Colonic mucosa (tissue), 4 donors: ENCODE measurements at regions of chrX and their contacts with region 1.

Region 1: DNA sequence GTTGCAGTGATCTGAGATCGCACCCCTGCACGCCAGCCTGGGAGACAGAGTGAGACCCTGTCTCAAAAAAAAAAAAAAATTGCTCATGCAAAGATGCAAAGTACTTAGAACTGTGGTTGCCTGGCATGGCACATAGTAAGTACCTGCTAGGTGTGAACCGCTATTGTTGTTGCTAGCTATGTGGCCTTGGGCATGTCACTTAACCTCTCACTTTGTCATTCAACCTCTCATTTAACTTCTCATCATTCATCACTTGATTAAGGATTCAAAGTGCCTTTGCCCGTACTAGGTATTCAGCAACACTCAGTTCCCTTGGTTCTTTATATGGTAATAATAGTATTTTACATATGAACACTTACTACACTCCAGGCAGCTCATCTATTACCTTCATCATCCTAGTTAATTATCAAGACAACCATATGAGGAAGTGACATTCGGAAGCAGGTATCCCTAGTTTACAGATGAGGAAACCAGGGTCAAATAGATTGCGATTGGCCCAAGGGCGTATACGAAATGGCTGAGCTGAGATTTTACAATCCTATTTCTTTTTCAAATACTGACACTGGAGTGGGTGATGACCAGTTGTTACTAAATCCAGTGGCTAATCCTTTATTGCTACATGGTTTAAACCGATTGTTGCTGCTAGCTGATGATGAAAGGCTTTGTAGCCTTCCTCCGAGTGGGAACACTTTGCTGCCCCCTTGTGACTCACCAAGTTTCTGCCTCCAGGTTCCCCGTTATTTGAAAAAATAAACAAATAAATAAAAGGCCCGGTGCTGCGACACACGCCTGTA is 28.8 kb upstream of the SOWAHD start:
- DNase-seq: peak; percentile 57
- H3K4me3 ChIP-seq: no peak overlapping the region
- H3K27ac ChIP-seq: no peak overlapping the region
- H3K4me1 ChIP-seq: no peaks in the 10 kb centered on the region
- H3K27me3 ChIP-seq: no peaks in the 10 kb centered on the region
- CTCF ChIP-seq: peak; percentile 47

Region 2: DNA sequence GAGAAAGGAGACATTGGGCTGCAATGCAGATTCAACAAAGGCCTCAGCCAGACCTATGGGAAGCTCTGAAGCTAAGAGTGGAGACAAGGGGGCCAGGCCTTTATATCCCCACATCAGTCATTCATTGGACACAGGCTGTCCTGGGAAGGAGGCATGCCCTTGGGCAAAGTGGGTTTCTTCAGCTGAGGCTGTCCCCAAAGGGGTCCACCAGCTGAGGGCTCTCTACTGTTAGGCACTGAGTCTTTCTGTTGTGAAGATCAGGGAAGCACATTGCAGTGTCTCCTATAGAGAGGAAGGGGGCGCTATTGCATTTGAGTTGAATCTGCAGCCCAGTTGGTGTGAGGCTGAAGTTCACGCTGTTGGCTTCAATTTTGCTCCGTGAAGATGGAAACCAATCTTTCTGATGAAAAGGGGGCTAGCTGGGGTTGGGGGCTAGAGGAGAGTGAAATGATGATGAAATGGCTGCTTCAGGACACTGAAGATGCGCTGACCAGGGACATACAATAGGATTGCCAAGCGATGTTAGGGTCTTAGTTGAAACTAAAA is 213.4 kb before region 1 on chrX:
- intact Hi-C with region 1: loop called (anchors 10 kb)
- DNase-seq: peak; percentile 40
- H3K4me3 ChIP-seq: no peak overlapping the region
- H3K27ac ChIP-seq: no peak overlapping the region
- H3K4me1 ChIP-seq: no peaks in the 10 kb centered on the region
- H3K27me3 ChIP-seq: no peaks in the 10 kb centered on the region
- CTCF ChIP-seq: peak; percentile 79

Region 3: GRCh38 chrX:119589810-119590209 is 139.8 kb before region 1 on chrX:
- intact Hi-C with region 1: no loop called
- DNase-seq: no peak
- H3K4me3 ChIP-seq: no peak overlapping the region
- H3K27ac ChIP-seq: no peak overlapping the region
- H3K4me1 ChIP-seq: no peaks in the 10 kb centered on the region
- H3K27me3 ChIP-seq: no peaks in the 10 kb centered on the region
- CTCF ChIP-seq: no peak

Region 4: GRCh38 chrX:119617517-119618164 is 112.0 kb before region 1 on chrX:
- intact Hi-C with region 1: loop called (anchors 10 kb)
- DNase-seq: no peak
- H3K4me3 ChIP-seq: no peak overlapping the region
- H3K27ac ChIP-seq: no peak overlapping the region
- H3K4me1 ChIP-seq: no peaks in the 10 kb centered on the region
- H3K27me3 ChIP-seq: no peaks in the 10 kb centered on the region
- CTCF ChIP-seq: no peak

Region 5: GRCh38 chrX:120294651-120295050 is 565.0 kb after region 1 on chrX:
- intact Hi-C with region 1: no loop called
- DNase-seq: no peak
- H3K4me3 ChIP-seq: no peak overlapping the region
- H3K27ac ChIP-seq: no peak overlapping the region
- H3K4me1 ChIP-seq: no peaks in the 10 kb centered on the region
- H3K27me3 ChIP-seq: no peaks in the 10 kb centered on the region
- CTCF ChIP-seq: no peak